Mammary epithelial cell (primary cell): ENCODE measurements at regions of chr22 and their contacts with region 1.

Region 1: GRCh38 chr22:41487037-41487935 is 18.4 kb downstream of the ACO2 start:
- DNase-seq: no peak
- H3K4me3 ChIP-seq: no peak overlapping the region
- H3K27ac ChIP-seq: no peak overlapping the region
- H3K4me1 ChIP-seq: no peaks in the 10 kb centered on the region
- H3K27me3 ChIP-seq: no peaks in the 10 kb centered on the region
- CTCF ChIP-seq: no peak

Region 2: GRCh38 chr22:41517172-41518047 is 30.1 kb after region 1 on chr22:
- CTCF ChIA-PET with region 1: no interaction called
- dilution Hi-C with region 1: no loop called
- in situ Hi-C with region 1: no loop called
- intact Hi-C with region 1: no loop called
- DNase-seq: peak; percentile 78
- H3K4me3 ChIP-seq: no peak overlapping the region
- H3K27ac ChIP-seq: peak overlapping the region; percentile 6
- H3K4me1 ChIP-seq: peaks cover 22% of the 10 kb centered on the region
- H3K27me3 ChIP-seq: no peaks in the 10 kb centered on the region
- CTCF ChIP-seq: peak; percentile 94 to 95

Region 3: DNA sequence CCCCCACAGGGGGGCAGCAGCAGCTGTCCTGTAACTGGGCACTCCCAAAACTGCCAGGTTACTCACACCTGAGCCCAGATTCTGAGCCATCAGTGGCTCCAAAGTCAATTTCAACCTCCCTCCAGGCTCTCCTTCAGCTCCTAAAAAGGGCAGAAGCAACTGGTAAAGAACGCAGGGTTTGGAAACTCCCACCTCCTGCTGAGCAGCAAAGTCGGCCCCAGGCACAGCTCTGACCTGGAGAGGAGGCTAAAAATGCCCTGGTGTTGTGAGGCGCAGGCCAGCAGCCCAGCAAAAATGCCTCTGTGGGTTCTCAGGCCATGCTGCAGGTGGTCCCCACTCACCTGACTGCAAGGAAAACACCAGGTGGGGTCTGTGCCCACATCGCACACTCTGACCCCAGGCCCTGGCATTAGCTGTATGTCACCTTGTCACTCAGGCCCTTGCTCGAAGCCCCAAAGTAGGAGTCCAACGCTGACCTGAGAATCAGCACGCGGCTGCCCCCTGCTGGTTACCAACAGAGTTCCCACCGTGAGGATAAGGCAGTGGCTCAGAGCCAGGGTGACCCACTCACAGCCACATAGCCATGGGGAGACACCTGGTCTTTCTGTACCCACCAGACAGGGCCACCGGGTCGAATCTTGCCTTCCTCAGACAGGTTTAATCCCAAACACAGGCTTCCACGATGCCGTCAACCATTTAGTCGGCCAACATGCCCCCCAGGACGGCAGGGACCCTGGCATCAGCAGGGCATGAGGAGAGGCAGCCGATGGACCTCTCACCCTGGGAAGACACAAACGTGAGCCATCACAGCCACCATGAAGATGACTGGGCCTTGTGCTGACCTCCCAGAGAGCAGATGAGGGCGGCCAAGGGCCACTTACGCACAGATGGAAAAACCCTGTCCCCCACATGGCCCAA is 45.9 kb after region 1 on chr22:
- CTCF ChIA-PET with region 1: no interaction called
- dilution Hi-C with region 1: loop called (anchors 5 kb)
- in situ Hi-C with region 1: no loop called
- intact Hi-C with region 1: no loop called
- DNase-seq: no peak
- H3K4me3 ChIP-seq: no peak overlapping the region
- H3K27ac ChIP-seq: no peak overlapping the region
- H3K4me1 ChIP-seq: no peaks in the 10 kb centered on the region
- H3K27me3 ChIP-seq: no peaks in the 10 kb centered on the region
- CTCF ChIP-seq: peak; percentile 76 to 78

Region 4: GRCh38 chr22:41563051-41563711 is 75.9 kb after region 1 on chr22:
- CTCF ChIA-PET with region 1: no interaction called
- dilution Hi-C with region 1: loop called (anchors 5 kb)
- in situ Hi-C with region 1: no loop called
- intact Hi-C with region 1: no loop called
- DNase-seq: peak; percentile 30
- H3K4me3 ChIP-seq: no peak overlapping the region
- H3K27ac ChIP-seq: no peak overlapping the region
- H3K4me1 ChIP-seq: peaks cover 15% of the 10 kb centered on the region
- H3K27me3 ChIP-seq: no peaks in the 10 kb centered on the region
- CTCF ChIP-seq: no peak